ENCODE measurements at regions of chr3 and their contacts with region 1.

Region 1: GRCh38 chr3:5568458-5568857 is 381.0 kb downstream of the EDEM1 start:
- DNase-seq: no peak
- H3K4me3 ChIP-seq: no peak overlapping the region
- H3K27ac ChIP-seq: no peak overlapping the region
- H3K4me1 ChIP-seq: no peaks in the 10 kb centered on the region
- H3K27me3 ChIP-seq: no peaks in the 10 kb centered on the region
- CTCF ChIP-seq: peak; percentile 52; the same call in 1 of the 2 replicates

Region 2: DNA sequence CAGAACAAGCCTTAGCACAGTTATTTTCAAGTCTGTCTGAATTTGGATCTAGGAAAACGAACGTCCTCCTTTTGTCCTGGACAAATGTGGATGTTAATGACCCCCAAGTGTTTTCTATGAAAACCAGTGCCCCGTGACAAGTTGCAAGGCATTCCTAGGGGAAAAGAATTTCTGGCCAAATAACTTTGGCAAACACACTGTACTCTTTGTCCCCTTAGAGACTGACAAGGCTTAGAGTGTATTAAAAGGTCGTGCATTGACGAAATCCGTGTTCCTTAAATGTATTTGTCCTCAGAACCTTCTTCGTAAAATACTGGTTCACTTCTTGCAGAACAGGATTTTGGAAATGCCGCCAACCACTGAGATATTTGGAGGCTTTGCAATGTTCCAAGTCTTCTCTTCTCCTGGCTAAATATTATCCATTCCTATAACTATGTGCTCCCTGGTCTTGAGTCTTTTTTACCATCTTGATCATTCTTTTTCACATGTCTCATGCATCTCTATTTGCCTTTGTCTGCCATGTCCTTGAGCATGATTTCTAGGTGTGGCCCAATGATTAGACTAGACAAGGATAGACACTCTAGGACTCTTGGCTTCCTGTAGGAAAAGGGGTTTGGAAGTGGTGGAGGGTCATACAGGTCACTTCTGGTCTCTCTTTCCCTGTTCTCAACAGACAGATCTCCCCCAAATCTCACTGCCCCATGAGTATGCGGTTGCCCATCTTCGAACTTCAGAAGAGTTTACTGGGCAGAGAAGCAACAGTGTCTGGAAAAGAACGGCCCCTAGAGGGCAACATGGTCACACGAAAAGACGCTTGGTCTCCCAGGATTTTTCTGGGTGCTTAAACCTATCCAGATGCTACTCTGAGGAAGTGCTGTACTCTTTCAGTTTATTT is 263.4 kb before region 1 on chr3:
- CTCF ChIA-PET with region 1: no interaction called
- POLR2A ChIA-PET with region 1: no interaction called
- intact Hi-C with region 1: loop called (anchors 5 kb)
- DNase-seq: peak; percentile 51 to 57
- H3K4me3 ChIP-seq: no peak overlapping the region
- H3K27ac ChIP-seq: no peak overlapping the region
- H3K4me1 ChIP-seq: no peaks in the 10 kb centered on the region
- H3K27me3 ChIP-seq: no peaks in the 10 kb centered on the region
- CTCF ChIP-seq: peak; percentile 76

Region 3: DNA sequence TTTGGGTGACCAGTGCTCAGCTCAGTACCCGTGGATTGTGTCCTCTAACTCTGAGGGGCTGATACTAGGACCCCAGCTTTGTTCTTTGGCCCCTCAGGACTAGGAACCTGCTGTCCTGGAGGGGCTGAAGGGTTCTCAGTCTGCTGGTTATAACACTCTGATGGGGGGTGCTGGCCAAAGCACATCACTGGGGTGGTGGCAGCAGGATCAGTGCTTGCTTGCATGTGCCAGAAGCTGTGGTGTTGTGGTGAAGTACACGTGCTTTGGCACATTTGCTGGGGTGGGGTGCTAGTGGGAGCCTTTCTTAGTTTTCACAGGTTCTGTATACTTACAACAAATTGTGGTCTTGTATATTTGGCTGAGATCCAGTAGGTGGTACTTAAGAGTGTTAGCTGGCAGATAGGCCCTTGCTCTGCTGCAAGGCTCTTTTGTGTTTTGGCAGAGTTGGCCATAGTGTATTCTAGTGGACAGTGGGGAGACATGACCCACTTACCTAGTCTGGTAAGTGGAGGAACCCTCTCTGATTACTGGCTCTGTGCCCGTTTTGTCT is 36.6 kb before region 1 on chr3:
- CTCF ChIA-PET with region 1: no interaction called
- POLR2A ChIA-PET with region 1: no interaction called
- intact Hi-C with region 1: no loop called
- DNase-seq: no peak
- H3K4me3 ChIP-seq: no peak overlapping the region
- H3K27ac ChIP-seq: no peak overlapping the region
- H3K4me1 ChIP-seq: no peaks in the 10 kb centered on the region
- H3K27me3 ChIP-seq: no peaks in the 10 kb centered on the region
- CTCF ChIP-seq: no peak

Region 4: DNA sequence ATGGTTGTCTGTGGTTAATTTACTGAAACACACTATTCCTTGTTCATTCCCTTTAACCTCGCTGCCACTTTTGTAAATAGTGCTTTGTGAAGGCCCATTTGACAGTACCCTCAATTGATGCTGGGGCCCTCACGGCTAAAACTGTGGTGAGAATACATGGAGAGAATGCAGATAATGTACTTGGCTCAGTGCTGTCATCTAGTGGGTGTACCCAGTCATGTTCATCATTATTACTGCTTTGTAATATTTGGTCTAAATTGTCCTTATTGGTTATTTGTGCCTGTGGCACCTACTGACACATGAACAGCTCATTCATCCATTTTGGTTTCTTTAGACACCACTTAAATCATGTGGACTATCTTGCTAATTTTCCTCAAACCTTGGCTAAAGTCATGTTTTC is 162.6 kb after region 1 on chr3:
- CTCF ChIA-PET with region 1: no interaction called
- POLR2A ChIA-PET with region 1: no interaction called
- intact Hi-C with region 1: loop called (anchors 1 kb)
- DNase-seq: no peak
- H3K4me3 ChIP-seq: no peak overlapping the region
- H3K27ac ChIP-seq: no peak overlapping the region
- H3K4me1 ChIP-seq: no peaks in the 10 kb centered on the region
- H3K27me3 ChIP-seq: no peaks in the 10 kb centered on the region
- CTCF ChIP-seq: peak; percentile 52

Region 5: DNA sequence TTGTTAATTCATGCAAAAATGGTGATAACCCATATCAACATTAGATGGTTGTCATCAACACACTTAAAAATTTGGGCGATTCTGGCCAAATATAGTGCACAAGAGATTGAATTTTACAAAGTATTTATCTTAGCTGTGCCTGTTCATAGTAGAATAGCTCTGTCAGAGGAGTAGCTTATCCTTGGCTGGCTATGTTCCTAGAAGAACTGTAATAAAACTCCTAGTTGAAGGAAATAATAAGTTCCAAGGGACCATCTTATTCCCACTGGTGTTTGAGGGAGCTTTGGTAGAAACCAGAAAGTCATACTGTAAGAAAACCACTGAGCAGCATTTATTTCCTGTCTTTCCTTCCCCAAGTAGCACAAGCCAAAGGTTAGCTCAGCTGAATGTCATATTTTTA is 1494.3 kb after region 1 on chr3:
- CTCF ChIA-PET with region 1: no interaction called
- POLR2A ChIA-PET with region 1: no interaction called
- intact Hi-C with region 1: loop called (anchors 5 kb)
- DNase-seq: no peak
- H3K4me3 ChIP-seq: no peak overlapping the region
- H3K27ac ChIP-seq: no peak overlapping the region
- H3K4me1 ChIP-seq: no peaks in the 10 kb centered on the region
- H3K27me3 ChIP-seq: no peaks in the 10 kb centered on the region
- CTCF ChIP-seq: no peak

Measured in PC-9 (cell line).